Heart left ventricle (tissue), 16 donors: ENCODE measurements at regions of chr16 and their contacts with region 1.

Region 1: DNA sequence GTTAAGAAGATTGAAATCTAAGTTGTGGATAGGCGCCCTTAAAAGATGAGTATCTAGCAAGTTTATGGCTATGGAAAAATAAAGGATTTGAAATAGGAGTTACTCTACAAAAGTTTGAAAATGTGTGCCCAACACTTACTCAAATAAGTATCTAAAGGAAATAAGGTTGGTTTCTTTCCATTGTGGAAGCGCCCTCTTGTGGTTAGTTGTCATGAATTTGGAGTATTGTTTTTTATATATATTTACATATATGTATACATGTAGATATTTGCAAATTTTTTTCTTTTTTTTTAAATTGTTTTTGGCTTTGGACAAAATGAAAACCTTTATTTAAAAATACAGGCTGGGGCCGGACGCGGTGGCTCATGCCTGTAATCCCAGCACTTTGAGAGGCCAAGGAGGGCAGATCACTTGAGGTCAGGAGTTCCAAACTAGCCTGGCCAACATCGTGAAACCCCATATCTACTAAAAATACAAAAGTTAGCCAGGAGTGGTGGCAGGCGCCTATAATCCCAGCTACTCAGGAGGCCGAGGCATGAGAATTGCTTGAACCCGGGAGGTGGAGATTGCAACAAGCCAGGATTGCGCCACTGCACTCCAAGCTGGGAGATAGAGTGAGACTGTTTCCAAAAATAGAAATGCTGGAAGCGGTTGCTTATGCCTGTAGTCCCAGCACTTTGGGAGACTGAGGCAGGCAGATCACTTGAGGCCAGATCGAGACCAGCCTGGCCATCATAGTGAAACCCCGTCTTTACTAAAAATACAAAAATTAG is 24.0 kb upstream of the VPS4A start:
- DNase-seq: peak in 3 of 5 donors; percentile 22 to 69 (median 53)
- ATAC-seq: peak; percentile 54 to 87 (median 81)
- H3K4me3 ChIP-seq: no peak overlapping the region
- H3K27ac ChIP-seq: no peak overlapping the region
- H3K4me1 ChIP-seq: peaks cover 0 to 14% (median 6%) of the 10 kb centered on the region in 12 donors
- H3K27me3 ChIP-seq: no peaks in the 10 kb centered on the region
- CTCF ChIP-seq: peak; percentile 57 to 83 (median 72)
- POLR2A ChIP-seq: no peak

Region 2: DNA sequence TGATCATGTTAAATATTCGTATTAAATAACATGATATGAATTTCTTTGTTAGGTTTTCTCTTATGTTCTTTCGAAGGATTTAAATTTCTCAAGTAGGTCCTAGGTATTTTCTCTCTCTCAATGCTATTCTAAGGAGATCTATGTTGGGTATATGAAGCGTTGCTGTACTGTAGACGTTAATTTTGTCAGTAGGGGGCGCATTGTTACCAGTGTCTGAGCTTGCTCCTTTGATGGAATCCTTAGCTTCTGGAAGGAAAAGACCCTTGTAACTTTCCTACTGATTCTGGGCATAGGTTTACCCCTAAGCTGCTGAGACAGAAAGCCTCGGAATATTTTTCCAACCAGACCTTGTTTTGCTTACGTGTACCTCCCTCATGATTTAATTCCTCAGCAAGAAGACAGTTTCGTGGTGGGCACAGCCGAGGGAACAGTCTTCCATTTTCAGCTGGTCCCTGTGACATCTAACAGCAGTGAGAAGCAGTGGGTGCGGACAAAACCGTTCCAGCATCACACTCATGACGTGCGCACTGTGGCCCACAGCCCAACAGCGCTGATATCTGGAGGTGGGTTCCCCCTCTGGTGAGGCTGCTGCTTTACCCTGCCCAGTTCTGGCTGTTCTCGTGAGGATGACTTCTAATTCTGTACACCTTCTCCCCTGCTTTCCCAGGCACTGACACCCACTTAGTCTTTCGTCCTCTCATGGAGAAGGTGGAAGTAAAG is 136.8 kb before region 1 on chr16:
- intact Hi-C with region 1: loop called (anchors 1 to 5 kb)
- DNase-seq: peak in 2 of 5 donors; percentile 46 to 52
- ATAC-seq: peak in 3 of 4 donors; percentile 82 to 84 (median 83)
- H3K4me3 ChIP-seq: no peak overlapping the region
- H3K27ac ChIP-seq: no peak overlapping the region
- H3K4me1 ChIP-seq: no peaks in the 10 kb centered on the region
- H3K27me3 ChIP-seq: no peaks in the 10 kb centered on the region
- CTCF ChIP-seq: peak; percentile 63 to 87 (median 78)
- POLR2A ChIP-seq: no peak

Region 3: DNA sequence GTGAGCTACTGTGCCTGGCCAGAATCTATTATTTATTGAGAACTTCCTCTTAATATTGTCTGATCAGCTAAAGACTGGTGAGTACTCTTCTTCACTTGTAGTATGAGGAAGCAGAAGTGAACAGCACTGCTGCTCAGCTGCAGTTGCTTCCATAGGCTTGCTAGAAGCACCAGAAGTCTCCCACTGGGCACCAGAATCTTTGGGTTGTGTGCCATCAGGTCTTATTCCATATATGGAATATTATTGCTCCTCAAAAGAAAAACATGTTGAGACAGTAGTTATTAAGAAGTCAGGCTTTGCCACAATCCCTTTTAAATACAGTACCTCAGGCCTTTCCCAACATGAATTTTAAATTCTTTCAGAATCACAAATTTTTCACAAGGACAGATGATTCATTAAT is 83.0 kb before region 1 on chr16:
- intact Hi-C with region 1: no loop called
- DNase-seq: no peak
- ATAC-seq: peak in 2 of 4 donors; percentile 28 to 51
- H3K4me3 ChIP-seq: no peak overlapping the region
- H3K27ac ChIP-seq: peak overlapping the region in 2 of 12 donors; percentile 41 to 42
- H3K4me1 ChIP-seq: peaks cover 0 to 29% (median 4%) of the 10 kb centered on the region in 12 donors
- H3K27me3 ChIP-seq: no peaks in the 10 kb centered on the region
- CTCF ChIP-seq: no peak
- POLR2A ChIP-seq: no peak

Region 4: DNA sequence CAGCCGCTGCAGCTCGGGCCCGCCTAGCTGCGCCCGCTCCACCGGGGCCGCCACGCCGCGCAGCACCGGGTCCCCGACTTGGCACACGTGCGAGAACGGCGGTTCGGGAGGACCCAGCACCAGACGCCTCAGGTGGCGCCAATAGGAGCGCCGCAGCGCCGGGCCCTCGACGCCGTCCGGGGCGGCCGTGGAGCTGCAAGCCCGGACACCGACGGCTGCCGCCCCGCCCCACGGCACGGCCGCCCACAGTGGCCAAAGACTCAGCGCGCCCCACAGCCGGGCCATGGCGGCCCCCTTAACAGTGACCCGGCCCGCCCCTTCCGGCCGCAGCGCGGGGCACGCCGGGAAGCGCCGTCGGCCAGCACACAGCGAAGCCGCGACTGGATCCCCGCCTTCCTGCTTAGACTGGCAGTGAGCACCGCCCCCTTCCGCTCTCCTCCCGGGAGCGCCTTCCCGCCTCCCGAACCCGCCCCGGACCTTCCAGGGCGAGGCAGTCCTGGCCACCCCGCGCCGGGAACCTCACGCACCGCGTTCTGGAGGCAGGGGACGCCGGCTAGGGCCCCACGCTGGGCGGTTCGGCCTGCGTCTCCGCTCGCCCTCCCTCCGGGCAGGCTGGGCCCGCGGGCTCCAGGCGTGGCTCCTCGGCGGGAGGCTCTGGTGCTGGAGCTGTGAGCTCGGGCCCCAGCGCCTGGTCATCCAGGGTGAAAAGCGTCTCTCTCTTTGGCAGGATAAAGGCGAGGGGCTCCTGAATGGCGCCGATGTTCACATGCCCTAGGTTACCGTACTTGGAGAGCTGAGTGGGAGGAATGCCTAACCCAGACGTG is 43.4 kb after region 1 on chr16 and contains the start of gene PDF:
- intact Hi-C with region 1: no loop called
- DNase-seq: peak; percentile 96
- ATAC-seq: peak; percentile 96 to 99 (median 97)
- H3K4me3 ChIP-seq: peak within 1 kb of the TSS; percentile 61 to 98 (median 91)
- H3K27ac ChIP-seq: peak within 1 kb of the TSS; percentile 61 to 98 (median 90)
- H3K4me1 ChIP-seq: peaks cover 3 to 52% (median 36%) of the 10 kb centered on the region in 12 donors
- H3K27me3 ChIP-seq: no peaks in the 10 kb centered on the region
- CTCF ChIP-seq: peak in 2 of 12 donors; percentile 14 to 22
- POLR2A ChIP-seq: peak in 1 of 2 donors; percentile 79
- total RNA-seq, gene PDF: 2.7 to 13.8 (median 6.0) TPM